Caco-2 (cell line): ENCODE measurements at regions of chr3 and their contacts with region 1.

Region 1: DNA sequence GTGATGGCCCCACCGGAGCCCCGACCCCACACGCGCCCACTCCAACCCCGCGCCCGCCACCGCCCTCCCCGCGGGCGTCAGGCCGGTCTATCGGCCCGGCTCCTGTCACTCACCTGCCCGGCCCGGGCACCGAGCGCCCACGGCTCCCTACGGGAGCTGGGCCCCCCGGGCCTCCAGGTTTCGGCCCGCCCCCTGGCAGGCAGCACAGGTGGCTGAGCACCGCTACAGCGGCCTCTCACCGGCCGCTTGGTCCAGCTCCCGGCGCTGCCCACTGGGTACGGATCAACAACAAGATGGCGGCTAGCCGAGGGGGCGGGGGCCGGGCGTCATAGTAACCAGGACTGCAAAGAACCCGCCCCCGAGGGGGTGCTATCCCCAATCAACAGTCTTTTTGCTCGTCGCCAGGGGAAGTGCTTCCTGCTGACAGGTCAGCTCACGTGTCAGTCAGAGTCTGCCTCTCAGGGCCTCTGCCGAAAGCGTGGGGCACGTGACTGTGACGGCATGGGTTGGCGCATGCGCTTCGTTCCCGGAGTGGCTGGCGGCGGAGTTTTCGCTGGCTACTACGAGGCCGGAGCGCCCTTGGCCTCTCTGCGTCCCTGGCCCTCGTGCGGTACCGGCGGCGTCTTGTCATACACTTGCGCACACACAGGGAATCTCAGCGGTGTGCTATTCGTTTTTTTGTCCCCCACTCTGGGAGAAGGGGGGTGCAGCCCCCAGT is at the start of gene IP6K1:
- DNase-seq: peak; percentile 99 to 100
- H3K4me3 ChIP-seq: peak within 1 kb of the TSS; percentile 71
- H3K4me3 Mint-ChIP-seq: peak within 1 kb of the TSS; percentile 85
- H3K27ac Mint-ChIP-seq: peak within 1 kb of the TSS; percentile 90
- H3K4me1 ChIP-seq: peaks cover 17% of the 10 kb centered on the region
- H3K4me1 Mint-ChIP-seq: peaks cover 2% of the 10 kb centered on the region
- H3K27me3 ChIP-seq: no peaks in the 10 kb centered on the region
- H3K27me3 Mint-ChIP-seq: no peaks in the 10 kb centered on the region
- CTCF ChIP-seq: no peak
- total RNA-seq, gene IP6K1: 35.5 and 39.6 TPM in 2 replicates

Region 2: GRCh38 chr3:49723628-49724551 is 62.5 kb before region 1 on chr3 and contains the start of gene GMPPB:
- CTCF ChIA-PET with region 1: no interaction called
- POLR2A ChIA-PET with region 1: interaction called, 3 read pairs
- intact Hi-C with region 1: loop called (anchors 5 kb)
- DNase-seq: peak; percentile 94 to 97
- H3K4me3 ChIP-seq: peak within 1 kb of the TSS; percentile 99
- H3K4me3 Mint-ChIP-seq: peak within 1 kb of the TSS; percentile 79
- H3K27ac Mint-ChIP-seq: peak within 1 kb of the TSS; percentile 92
- H3K4me1 ChIP-seq: peaks cover 9% of the 10 kb centered on the region
- H3K4me1 Mint-ChIP-seq: peaks cover 7% of the 10 kb centered on the region
- H3K27me3 ChIP-seq: no peaks in the 10 kb centered on the region
- H3K27me3 Mint-ChIP-seq: no peaks in the 10 kb centered on the region
- CTCF ChIP-seq: no peak
- total RNA-seq, gene GMPPB: 26.2 and 26.5 TPM in 2 replicates

Region 3: GRCh38 chr3:49802719-49803464 is 16.5 kb after region 1 on chr3 and contains the start of gene INKA1:
- CTCF ChIA-PET with region 1: interaction called, 11 read pairs
- POLR2A ChIA-PET with region 1: interaction called, 3 read pairs
- intact Hi-C with region 1: loop called (anchors 2 kb)
- DNase-seq: peak; percentile 82 to 89
- H3K4me3 ChIP-seq: peak within 1 kb of the TSS; percentile 74
- H3K4me3 Mint-ChIP-seq: peak within 1 kb of the TSS; percentile 91
- H3K27ac Mint-ChIP-seq: peak within 1 kb of the TSS; percentile 71
- H3K4me1 ChIP-seq: no peaks in the 10 kb centered on the region
- H3K4me1 Mint-ChIP-seq: peaks cover 16% of the 10 kb centered on the region
- H3K27me3 ChIP-seq: no peaks in the 10 kb centered on the region
- H3K27me3 Mint-ChIP-seq: peaks cover 2% of the 10 kb centered on the region
- CTCF ChIP-seq: peak; percentile 78 to 88
- total RNA-seq, gene INKA1: not detected in 2 replicates